Activated CD4-positive, alpha-beta T cell treated with anti-CD3 and anti-CD28 coated beads for 36 hours (primary cell): ENCODE measurements at regions of chr10 and their contacts with region 1.

Region 1: DNA sequence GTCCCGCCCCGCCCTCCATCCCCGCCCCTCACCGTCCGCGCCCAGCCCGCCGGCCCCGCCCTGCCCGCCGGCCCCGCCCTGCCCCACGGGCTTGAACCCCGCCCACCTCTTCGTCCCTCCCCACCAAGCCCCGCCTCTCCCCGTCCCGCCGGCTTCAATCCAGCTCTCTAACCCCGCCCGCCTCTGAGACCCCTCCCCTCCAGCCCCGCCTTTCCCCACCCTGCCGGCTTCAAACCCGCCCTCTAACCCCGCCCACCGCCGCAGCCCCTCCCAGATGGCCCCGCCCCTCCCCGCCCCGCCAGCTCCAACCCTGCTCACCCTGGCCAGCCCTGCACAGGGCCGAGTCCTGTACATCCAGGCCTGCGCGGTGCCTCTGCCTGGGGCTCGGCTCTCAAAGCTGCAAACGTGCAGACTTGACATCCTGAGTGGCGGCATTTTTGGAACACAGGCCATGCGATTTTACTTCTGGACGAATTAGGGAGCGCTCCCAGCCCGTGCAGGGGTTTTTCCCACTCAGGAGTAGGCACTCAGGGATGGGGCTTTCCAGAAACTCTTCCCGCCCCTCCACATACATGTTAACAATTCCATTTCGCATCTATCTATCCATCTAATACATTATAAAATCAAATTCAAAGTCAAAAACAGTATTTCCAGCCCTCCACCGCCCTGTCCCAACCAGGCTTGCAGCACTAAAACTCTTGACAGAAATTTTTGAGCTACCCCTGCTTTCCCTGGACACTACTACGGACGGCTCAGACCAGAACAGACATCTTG is 475 bp upstream of the NMT2 start:
- DNase-seq: peak; percentile 100
- ATAC-seq: peak; percentile 80
- H3K4me3 Mint-ChIP-seq: peak overlapping the region; percentile 70
- H3K27ac Mint-ChIP-seq: peak overlapping the region; percentile 85
- H3K4me1 Mint-ChIP-seq: peaks cover 55% of the 10 kb centered on the region
- H3K27me3 Mint-ChIP-seq: no peaks in the 10 kb centered on the region

Region 2: DNA sequence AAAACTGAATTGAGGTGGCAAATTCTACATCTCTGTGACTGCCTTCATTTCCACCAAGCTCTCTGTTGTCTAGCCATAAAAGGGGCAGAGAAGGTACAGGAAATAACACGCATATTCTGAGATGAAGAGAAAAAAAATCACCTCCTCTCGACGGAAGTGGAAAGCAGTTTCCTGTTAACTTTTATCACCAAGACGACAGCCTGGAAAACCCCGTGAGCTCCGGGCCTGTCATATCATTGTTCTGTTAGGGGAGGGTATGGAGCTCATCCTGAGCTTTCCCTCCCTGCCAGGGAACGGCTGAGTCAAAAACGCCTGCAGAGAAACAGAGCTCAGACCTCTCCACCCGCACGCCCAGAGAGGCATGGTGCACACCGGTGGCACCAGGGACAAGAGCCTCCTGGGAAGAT is 1382.0 kb before region 1 on chr10:
- CTCF ChIA-PET with region 1: no interaction called
- POLR2A ChIA-PET with region 1: no interaction called
- intact Hi-C with region 1: loop called in 1 of 2 experiments (anchors 5 kb)
- DNase-seq: peak; percentile 87
- ATAC-seq: peak; percentile 87
- H3K4me3 Mint-ChIP-seq: peak overlapping the region; percentile 32
- H3K27ac Mint-ChIP-seq: peak overlapping the region; percentile 90
- H3K4me1 Mint-ChIP-seq: peaks cover 22% of the 10 kb centered on the region
- H3K27me3 Mint-ChIP-seq: no peaks in the 10 kb centered on the region

Region 3: DNA sequence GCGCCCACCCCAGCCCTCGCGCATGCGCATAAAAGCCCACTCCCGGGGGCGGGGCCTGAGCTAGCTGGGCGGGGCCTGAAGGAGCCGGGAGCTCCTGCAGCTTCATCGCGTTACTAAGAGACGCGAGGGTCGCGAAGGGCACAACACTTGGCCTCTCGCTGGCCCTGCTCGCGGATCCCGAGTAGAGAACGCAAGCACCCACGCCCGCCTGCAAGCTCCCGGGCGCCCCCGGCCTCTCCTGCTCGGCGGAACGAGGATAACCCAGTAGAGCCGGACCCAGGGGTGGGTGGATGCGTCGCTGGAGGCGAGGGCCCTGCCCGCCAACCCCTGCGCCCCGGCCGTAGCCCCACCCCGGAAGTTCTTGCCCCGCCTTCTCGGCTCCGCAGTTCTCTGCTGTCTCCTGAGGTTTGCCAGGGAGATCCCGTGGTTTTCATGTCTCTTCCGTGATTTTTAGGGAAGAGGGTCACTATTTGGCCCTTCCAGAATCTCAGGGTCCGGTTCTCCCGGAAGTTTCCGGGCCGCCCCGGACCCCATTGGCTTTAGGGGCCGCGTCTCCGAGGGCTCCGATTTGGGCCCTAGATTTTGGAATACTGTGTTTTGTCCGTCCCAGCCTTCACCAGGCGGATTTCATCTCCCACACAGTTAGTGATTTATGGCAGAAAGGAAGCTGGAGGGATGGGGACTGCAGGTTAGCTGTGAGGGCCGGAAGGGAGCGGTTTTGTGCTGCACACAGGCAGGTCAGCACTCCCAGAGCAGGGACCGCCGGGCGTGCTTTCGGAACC is 209.5 kb before region 1 on chr10 and contains the start of gene MEIG1:
- CTCF ChIA-PET with region 1: no interaction called
- POLR2A ChIA-PET with region 1: no interaction called
- intact Hi-C with region 1: loop called (anchors 1 kb)
- DNase-seq: peak; percentile 96
- ATAC-seq: peak; percentile 87
- H3K4me3 Mint-ChIP-seq: peak within 1 kb of the TSS; percentile 97
- H3K27ac Mint-ChIP-seq: peak within 1 kb of the TSS; percentile 98
- H3K4me1 Mint-ChIP-seq: peaks cover 26% of the 10 kb centered on the region
- H3K27me3 Mint-ChIP-seq: no peaks in the 10 kb centered on the region
- total RNA-seq, gene MEIG1: 0.81 to 1.1 TPM

Region 4: GRCh38 chr10:15122477-15123030 is 46.4 kb before region 1 on chr10:
- CTCF ChIA-PET with region 1: interaction called, 13 read pairs
- POLR2A ChIA-PET with region 1: interaction called, 10 read pairs
- intact Hi-C with region 1: loop called (anchors 1 kb)
- DNase-seq: peak; percentile 47
- ATAC-seq: peak; percentile 72
- H3K4me3 Mint-ChIP-seq: peak overlapping the region; percentile 40
- H3K27ac Mint-ChIP-seq: peak overlapping the region; percentile 92
- H3K4me1 Mint-ChIP-seq: peaks cover 36% of the 10 kb centered on the region
- H3K27me3 Mint-ChIP-seq: no peaks in the 10 kb centered on the region

Region 5: DNA sequence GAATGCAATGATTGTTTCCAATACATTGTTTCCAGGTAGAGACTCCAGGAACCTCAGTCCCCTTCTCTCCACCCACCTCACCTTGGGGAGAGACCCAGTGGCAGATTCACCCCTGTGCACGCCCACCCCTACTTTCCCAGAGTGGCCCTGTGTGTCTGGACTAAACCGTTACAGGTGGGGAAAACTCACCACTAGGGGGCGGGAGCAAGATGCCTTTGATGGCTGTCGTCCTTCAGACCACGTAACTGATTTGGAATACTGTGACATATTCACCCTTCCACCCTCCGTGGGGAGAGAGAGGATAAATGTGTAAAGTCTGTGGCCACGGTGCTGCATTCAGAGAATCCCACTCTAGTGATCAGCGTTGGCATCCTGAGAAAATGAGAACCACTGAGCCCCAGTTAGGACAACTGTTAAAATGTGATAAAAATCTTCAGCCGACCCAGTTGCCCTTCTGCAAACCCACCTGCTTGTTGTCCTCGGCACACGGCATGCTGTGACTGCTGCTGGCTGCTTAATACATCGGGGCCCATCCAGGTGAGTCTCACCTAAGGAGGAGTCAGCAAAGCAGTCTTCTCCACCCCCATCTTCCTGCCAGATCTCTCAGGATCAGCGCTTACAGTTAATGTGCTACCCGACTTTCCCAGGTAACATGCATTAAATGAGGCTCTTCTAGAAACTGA is 41.0 kb after region 1 on chr10:
- CTCF ChIA-PET with region 1: interaction called, 6 read pairs
- POLR2A ChIA-PET with region 1: no interaction called
- intact Hi-C with region 1: loop called (anchors 1 kb)
- DNase-seq: peak; percentile 91
- ATAC-seq: peak; percentile 66
- H3K4me3 Mint-ChIP-seq: no peak overlapping the region
- H3K27ac Mint-ChIP-seq: no peak overlapping the region
- H3K4me1 Mint-ChIP-seq: peaks cover 51% of the 10 kb centered on the region
- H3K27me3 Mint-ChIP-seq: no peaks in the 10 kb centered on the region

Region 6: GRCh38 chr10:16817125-16818019 is 1648.4 kb after region 1 on chr10 and contains the start of gene RSU1:
- CTCF ChIA-PET with region 1: no interaction called
- POLR2A ChIA-PET with region 1: no interaction called
- intact Hi-C with region 1: loop called in 1 of 2 experiments (anchors 2 kb)
- DNase-seq: peak; percentile 100
- ATAC-seq: peak; percentile 99
- H3K4me3 Mint-ChIP-seq: peak within 1 kb of the TSS; percentile 87
- H3K27ac Mint-ChIP-seq: peak within 1 kb of the TSS; percentile 95
- H3K4me1 Mint-ChIP-seq: peaks cover 27% of the 10 kb centered on the region
- H3K27me3 Mint-ChIP-seq: no peaks in the 10 kb centered on the region
- total RNA-seq, gene RSU1: 38.4 to 62.8 TPM